ENCODE measurements at regions of chr7 and their contacts with region 1.

Region 1: DNA sequence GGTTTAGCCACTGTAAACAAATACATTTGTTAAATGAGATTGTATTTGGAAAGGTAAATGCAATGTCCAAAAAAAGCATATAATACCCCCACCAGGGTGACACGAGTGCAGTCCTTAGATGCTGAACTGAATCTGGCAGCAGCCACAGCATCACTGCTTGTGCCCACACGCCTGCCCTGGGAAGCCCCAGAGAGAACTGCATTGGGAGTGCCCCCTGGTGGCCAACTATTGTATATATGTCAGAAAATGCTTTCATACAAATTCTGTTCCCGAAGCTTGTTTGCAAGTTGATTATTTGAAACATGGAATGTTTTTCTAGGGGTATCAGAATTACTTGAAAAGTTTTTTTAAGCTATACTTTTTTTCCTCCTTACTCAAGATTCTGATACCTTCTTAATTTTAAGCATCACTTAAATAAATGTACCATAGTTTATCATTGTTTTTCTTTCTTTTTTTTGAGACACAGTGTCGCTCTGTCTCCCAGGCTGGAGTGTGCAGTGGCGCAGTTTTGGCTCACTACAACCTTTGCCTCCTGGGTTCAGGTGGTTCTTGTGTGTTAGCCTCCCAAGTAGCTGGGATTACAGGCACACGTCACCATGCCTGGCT is 50.1 kb downstream of the LANCL2 start:
- DNase-seq: peak; percentile 71 to 85
- H3K4me3 ChIP-seq: no peak overlapping the region
- H3K27ac ChIP-seq: no peak overlapping the region
- H3K4me1 ChIP-seq: no peaks in the 10 kb centered on the region
- H3K27me3 ChIP-seq: no peaks in the 10 kb centered on the region
- CTCF ChIP-seq: peak; percentile 71 to 83 (median 78)
- POLR2A ChIP-seq: no peak

Region 2: DNA sequence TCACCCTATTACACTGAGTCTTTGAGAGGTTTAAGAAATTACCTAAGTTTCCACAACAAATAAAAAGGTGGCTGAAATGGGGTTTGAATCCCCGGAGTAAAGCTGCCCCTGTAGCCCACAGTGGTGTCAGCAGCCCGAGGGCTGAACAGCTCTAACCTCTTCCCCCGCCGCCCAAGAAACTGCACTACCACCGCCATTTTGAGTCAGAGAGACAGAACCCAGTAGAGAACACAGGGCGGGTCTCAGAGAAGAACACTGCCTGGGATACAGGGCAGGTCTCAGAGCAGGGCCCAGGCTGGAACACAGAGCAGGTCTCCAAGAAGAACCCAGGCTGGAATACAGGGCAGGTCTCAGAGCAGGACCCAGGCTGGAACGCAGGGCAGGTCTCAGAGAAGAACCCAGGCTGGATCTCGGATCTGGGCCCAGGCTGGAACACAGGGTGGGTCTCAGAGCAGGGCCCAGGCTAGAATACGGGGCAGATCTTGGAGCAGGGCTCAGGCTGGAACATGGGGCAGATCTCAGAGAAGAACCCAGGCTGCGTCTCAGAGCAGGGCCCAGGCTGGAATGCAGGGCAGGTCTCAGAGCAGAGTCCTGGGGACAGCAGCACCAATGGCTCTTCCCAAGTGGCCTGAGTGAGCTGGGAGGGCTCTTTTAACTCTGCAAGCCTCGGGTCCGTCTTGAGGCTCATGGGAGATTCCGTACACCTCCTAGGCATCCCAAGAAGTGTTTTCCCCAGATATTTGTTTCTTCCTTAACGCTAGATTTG is 136.0 kb before region 1 on chr7:
- intact Hi-C with region 1: loop called (anchors 5 kb)
- DNase-seq: no peak
- H3K4me3 ChIP-seq: no peak overlapping the region
- H3K27ac ChIP-seq: no peak overlapping the region
- H3K4me1 ChIP-seq: no peaks in the 10 kb centered on the region
- H3K27me3 ChIP-seq: no peaks in the 10 kb centered on the region
- CTCF ChIP-seq: no peak
- POLR2A ChIP-seq: no peak

Region 3: DNA sequence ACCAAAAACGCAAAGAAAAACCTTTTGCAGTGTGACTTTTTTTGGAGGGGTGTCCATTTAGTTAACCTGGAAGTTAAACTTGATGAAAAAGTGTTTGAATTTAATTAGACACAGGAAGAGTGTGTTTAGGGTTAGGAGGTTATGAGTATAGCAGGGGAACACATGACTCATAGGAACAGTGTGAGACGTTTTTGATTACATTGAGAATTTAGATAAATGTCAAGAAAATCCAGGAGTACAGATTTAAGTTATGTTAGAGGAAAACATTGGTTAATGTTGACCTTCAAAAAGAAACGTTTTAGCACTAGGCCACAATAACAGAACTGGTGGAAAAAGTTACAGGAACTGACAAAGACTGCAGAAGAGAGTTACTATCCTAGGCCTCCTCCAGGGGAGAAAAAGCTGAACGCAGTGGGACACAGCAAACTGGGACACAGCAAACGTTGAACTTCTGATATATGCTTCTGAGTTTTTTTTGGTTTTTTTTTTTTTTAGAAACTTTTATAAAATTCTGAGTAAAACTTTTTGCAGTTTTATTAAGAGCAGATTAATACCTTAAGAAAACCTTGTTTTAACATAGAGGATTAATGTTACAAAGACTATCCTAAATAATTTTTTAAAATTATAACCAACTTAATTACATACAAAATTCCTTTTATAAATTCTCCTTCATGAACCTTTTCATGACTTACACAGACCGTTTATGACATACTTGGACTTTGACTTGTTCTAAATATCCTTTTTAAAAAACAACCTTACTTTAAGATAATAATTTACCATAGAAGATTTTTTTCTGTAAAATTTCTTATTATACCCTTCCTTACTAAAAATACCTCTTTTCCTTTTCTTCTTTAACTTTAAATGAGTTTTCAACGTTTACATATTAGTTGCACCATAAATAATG is 28.0 kb before region 1 on chr7:
- intact Hi-C with region 1: no loop called
- DNase-seq: no peak
- H3K4me3 ChIP-seq: no peak overlapping the region
- H3K27ac ChIP-seq: no peak overlapping the region
- H3K4me1 ChIP-seq: no peaks in the 10 kb centered on the region
- H3K27me3 ChIP-seq: no peaks in the 10 kb centered on the region
- CTCF ChIP-seq: no peak
- POLR2A ChIP-seq: no peak

Measured in uterus (tissue), 4 donors.